ACHN (cell line): ENCODE measurements at regions of chr12 and their contacts with region 1.

Region 1: GRCh38 chr12:69879041-69879960 is 54.3 kb downstream of the MYRFL start:
- DNase-seq: peak; percentile 77

Region 2: GRCh38 chr12:70549340-70550179 is 670.3 kb after region 1 on chr12:
- in situ Hi-C with region 1: loop called (anchors 25 kb)
- DNase-seq: no peak

Region 3: GRCh38 chr12:70719672-70720420 is 840.5 kb after region 1 on chr12:
- in situ Hi-C with region 1: loop called (anchors 25 kb)
- DNase-seq: peak; percentile 27